ENCODE measurements at regions of chrX and their contacts with region 1.

Region 1: GRCh38 chrX:40153335-40154249 is 55.8 kb upstream of the BCOR start:
- DNase-seq: peak; percentile 64
- ATAC-seq: peak; percentile 31
- H3K4me3 Mint-ChIP-seq: peak overlapping the region; percentile 69
- H3K27ac Mint-ChIP-seq: no peak overlapping the region
- H3K4me1 Mint-ChIP-seq: peaks cover 27% of the 10 kb centered on the region
- H3K27me3 Mint-ChIP-seq: no peaks in the 10 kb centered on the region

Region 2: GRCh38 chrX:40169193-40170101 is 15.9 kb after region 1 on chrX:
- CTCF ChIA-PET with region 1: interaction called, 3 read pairs
- POLR2A ChIA-PET with region 1: interaction called, 11 read pairs
- DNase-seq: peak; percentile 89
- ATAC-seq: peak; percentile 62
- H3K4me3 Mint-ChIP-seq: peak overlapping the region; percentile 78
- H3K27ac Mint-ChIP-seq: peak overlapping the region; percentile 96
- H3K4me1 Mint-ChIP-seq: peaks cover 67% of the 10 kb centered on the region
- H3K27me3 Mint-ChIP-seq: no peaks in the 10 kb centered on the region

Region 3: GRCh38 chrX:40175511-40176350 is 22.1 kb after region 1 on chrX:
- CTCF ChIA-PET with region 1: no interaction called
- POLR2A ChIA-PET with region 1: interaction called, 14 read pairs
- DNase-seq: peak; percentile 79
- ATAC-seq: peak; percentile 40
- H3K4me3 Mint-ChIP-seq: peak overlapping the region; percentile 78
- H3K27ac Mint-ChIP-seq: peak overlapping the region; percentile 96
- H3K4me1 Mint-ChIP-seq: peaks cover 39% of the 10 kb centered on the region
- H3K27me3 Mint-ChIP-seq: no peaks in the 10 kb centered on the region

Measured in activated CD8-positive, alpha-beta T cell treated with anti-CD3 and anti-CD28 coated beads, Interleukin-2, amount 10 ng/mL, durations not matched to agents 7 days and 5 days (primary cell).